CD8-positive, alpha-beta T cell (primary cell): ENCODE measurements at regions of chr11 and their contacts with region 1.

Region 1: DNA sequence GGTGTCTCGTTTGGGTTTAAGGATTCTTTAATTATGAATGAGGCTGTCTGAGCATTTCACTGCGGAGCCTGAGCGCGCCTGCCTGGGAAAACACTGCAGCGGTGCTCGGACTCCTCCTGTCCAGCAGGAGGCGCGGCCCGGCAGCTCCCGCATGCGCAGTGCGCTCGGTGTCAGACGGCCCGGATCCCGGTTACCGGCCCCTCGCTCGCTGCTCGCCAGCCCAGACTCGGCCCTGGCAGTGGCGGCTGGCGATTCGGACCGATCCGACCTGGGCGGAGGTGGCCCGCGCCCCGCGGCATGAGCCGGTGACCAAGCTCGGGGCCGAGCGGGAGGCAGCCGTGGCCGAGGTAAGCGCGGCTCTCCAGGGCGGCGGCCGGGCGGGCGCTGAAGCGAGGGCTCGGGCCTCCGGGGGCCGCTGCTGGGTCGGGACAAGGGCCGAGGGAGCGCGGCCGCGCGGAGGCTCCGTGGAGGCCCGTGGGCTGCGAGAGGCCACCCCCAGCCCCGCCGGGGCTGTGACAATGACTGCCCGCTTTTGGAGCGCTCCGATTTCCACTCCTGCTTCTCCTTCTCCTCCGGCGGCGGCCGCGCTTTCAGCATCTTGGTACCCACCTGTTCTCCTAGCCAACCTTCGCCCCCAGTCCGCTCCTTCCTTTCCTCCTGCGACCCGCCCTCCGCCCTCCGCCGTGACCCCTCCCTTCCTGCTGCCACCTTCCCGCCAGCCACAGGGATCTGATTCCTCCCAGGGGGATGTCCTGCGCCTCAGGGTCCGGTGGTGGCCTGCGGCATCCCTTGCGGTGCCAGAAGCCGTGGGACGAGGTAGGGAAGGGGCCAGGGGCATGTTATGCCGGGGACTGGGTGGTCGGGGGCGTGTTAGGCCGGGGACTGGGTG is at the start of gene EXT2:
- DNase-seq: peak; percentile 67 to 91 (median 87)
- ATAC-seq: peak; percentile 95
- H3K4me3 ChIP-seq: peak within 1 kb of the TSS; percentile 68 to 73
- H3K4me3 Mint-ChIP-seq: peak within 1 kb of the TSS; percentile 88
- H3K27ac ChIP-seq: peak within 1 kb of the TSS in 1 of 2 experiments; percentile 25
- H3K27ac Mint-ChIP-seq: peak within 1 kb of the TSS; percentile 57
- H3K4me1 ChIP-seq: peaks cover 26% of the 10 kb centered on the region
- H3K4me1 Mint-ChIP-seq: peaks cover 40% of the 10 kb centered on the region
- H3K27me3 ChIP-seq: no peaks in the 10 kb centered on the region
- H3K27me3 Mint-ChIP-seq: no peaks in the 10 kb centered on the region
- CTCF ChIP-seq: peak; percentile 91
- total RNA-seq, gene EXT2: 15.8 to 16.1 TPM

Region 2: DNA sequence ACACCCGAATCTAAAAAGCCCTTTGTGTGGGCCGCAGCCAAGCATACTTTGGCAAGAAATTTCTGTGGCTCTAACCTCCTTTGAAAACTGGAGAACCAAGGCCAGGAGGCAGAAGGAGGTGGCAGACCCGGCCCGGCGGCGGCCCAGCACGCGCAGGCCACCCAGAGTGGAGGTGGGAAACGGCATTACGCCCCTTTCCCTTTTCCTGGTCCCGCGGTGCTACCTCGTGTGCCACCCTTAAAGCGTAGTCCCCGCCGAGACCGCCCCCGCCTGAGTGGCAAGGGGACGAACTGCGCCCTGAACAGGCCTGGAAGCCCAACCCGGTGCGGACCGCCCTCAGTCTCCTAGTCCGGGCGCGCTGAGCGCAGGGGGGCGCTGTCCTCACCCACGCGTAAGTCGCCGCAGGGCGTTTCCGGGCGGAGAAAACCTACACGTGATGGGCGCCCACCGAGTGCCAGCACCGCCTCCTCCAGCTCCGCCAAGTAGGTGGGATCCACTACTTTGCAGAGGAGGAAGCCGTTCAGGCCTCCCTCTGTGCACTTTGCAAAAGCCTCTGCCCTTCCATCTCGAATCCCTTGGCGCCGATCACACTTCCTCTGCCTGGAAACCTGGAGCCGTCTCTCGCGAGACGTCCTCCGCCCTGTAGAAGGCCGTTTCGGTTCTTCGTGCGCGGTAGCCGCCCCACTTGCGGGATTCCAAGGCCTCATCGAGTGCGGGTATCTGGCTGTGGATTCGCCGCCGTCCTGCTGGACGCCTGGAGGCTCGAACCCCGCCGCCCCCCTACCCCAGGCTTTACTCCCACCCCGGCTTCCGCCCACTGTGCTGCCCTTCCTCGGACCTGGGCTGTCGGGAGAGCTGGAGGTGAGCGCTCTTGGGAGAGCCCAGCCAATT is 29.7 kb before region 1 on chr11 and contains the start of gene ACCS:
- CTCF ChIA-PET with region 1: interaction called, 35 read pairs
- POLR2A ChIA-PET with region 1: interaction called, 3 read pairs
- intact Hi-C with region 1: loop called (anchors 1 kb)
- DNase-seq: peak; percentile 80 to 96 (median 93)
- ATAC-seq: peak; percentile 96
- H3K4me3 ChIP-seq: peak within 1 kb of the TSS; percentile 80 to 83
- H3K4me3 Mint-ChIP-seq: peak within 1 kb of the TSS; percentile 91
- H3K27ac ChIP-seq: peak within 1 kb of the TSS; percentile 70 to 71
- H3K27ac Mint-ChIP-seq: peak within 1 kb of the TSS; percentile 92
- H3K4me1 ChIP-seq: peaks cover 6% of the 10 kb centered on the region
- H3K4me1 Mint-ChIP-seq: peaks cover 30% of the 10 kb centered on the region
- H3K27me3 ChIP-seq: no peaks in the 10 kb centered on the region
- H3K27me3 Mint-ChIP-seq: no peaks in the 10 kb centered on the region
- CTCF ChIP-seq: peak; percentile 83
- total RNA-seq, gene ACCS: 16.7 to 18.1 TPM

Region 3: DNA sequence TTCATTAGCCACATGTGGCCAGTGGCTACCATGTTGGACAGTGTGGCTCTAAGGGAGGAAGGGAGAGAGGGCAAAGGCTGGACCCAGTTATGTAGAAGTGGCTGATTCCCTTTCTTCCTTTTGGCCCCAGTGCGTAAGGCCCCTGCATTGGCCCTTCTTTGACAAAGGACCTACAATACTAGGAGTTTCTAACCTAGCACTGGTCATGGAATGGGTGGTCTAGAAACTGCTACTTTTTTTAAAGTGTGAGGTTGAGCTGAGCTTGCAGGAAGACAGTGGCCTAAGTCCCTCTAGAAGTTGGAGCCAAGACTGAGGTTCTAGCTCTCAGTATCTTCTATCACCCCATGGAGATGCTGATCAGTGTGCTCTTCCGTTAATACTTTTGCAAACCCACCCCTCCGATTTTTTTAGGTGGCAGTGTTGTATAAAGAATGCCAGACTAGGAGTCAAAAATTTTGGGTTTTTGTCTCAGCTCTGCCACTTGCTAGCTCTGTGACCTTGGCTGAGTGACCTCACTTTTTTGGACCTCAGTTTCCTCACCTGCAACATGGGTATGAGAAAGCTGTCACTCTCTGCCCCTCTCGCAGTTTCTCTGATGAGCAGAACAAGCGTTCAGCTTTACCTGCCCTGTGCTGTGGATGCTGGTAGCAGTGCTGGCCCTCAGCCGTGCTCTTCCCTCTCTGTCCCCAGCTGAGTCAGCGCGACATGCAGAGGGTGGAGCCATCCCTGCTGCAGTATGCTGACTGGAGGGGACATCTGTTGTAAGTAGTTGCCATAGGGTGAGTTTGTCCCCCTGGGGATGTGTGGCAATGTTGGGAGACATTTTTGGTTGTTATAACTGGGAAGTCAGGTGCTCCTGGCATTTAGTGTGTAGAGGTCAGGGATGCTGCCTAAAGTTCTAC is 22.7 kb before region 1 on chr11:
- CTCF ChIA-PET with region 1: interaction called, 35 read pairs
- POLR2A ChIA-PET with region 1: no interaction called
- intact Hi-C with region 1: no loop called
- DNase-seq: no peak
- ATAC-seq: no peak
- H3K4me3 ChIP-seq: no peak overlapping the region
- H3K4me3 Mint-ChIP-seq: no peak overlapping the region
- H3K27ac ChIP-seq: no peak overlapping the region
- H3K27ac Mint-ChIP-seq: no peak overlapping the region
- H3K4me1 ChIP-seq: no peaks in the 10 kb centered on the region
- H3K4me1 Mint-ChIP-seq: peaks cover 7% of the 10 kb centered on the region
- H3K27me3 ChIP-seq: no peaks in the 10 kb centered on the region
- H3K27me3 Mint-ChIP-seq: no peaks in the 10 kb centered on the region
- CTCF ChIP-seq: no peak

Region 4: DNA sequence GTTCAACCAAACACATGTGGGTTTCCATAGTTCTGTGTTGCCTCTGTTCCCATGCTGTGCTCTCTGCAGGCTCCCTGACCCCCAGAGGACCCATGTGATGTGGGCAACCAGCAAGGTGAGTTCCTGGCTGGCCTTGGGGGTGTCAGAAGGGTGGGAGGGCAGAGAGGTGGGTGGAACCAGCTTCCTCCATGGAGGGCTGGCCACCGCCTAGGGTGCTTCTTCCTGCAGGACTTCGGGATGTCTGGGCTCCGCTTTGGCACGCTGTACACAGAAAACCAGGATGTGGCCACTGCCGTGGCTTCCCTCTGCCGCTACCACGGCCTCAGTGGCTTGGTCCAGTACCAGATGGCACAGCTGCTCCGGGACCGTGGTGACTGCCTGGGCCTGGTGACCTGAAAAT is 14.8 kb before region 1 on chr11:
- CTCF ChIA-PET with region 1: interaction called, 12 read pairs
- POLR2A ChIA-PET with region 1: no interaction called
- intact Hi-C with region 1: no loop called
- DNase-seq: no peak
- ATAC-seq: no peak
- H3K4me3 ChIP-seq: no peak overlapping the region
- H3K4me3 Mint-ChIP-seq: no peak overlapping the region
- H3K27ac ChIP-seq: no peak overlapping the region
- H3K27ac Mint-ChIP-seq: no peak overlapping the region
- H3K4me1 ChIP-seq: no peaks in the 10 kb centered on the region
- H3K4me1 Mint-ChIP-seq: no peaks in the 10 kb centered on the region
- H3K27me3 ChIP-seq: no peaks in the 10 kb centered on the region
- H3K27me3 Mint-ChIP-seq: no peaks in the 10 kb centered on the region
- CTCF ChIP-seq: no peak

Region 5: DNA sequence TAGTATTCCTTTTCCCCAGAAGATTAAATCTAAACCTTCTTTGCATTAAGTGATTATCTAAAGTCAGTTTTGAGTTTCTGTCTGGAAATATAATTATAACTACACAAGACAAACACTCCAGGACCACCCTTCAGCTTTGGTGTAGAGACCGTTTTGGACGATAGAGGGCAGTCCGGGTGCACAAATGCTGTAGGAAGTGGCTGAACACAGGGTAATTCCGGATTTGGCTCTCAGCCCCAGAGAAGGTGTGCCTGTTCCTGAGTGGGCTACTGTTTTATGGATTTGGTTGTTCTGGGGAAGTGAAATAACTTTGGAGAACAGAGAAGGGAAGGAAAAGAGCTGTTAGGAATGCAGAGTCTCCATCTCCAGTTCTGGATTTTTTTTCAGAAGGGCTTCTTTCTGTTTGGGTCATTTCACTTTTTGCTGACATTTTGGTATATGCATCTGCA is 14.5 kb after region 1 on chr11:
- CTCF ChIA-PET with region 1: interaction called, 59 read pairs
- POLR2A ChIA-PET with region 1: no interaction called
- intact Hi-C with region 1: loop called in 1 of 2 experiments (anchors 1 kb)
- DNase-seq: peak; percentile 25 to 73 (median 54)
- ATAC-seq: peak; percentile 94
- H3K4me3 ChIP-seq: no peak overlapping the region
- H3K4me3 Mint-ChIP-seq: no peak overlapping the region
- H3K27ac ChIP-seq: no peak overlapping the region
- H3K27ac Mint-ChIP-seq: no peak overlapping the region
- H3K4me1 ChIP-seq: peaks cover 5% of the 10 kb centered on the region
- H3K4me1 Mint-ChIP-seq: peaks cover 8% of the 10 kb centered on the region
- H3K27me3 ChIP-seq: no peaks in the 10 kb centered on the region
- H3K27me3 Mint-ChIP-seq: no peaks in the 10 kb centered on the region
- CTCF ChIP-seq: peak; percentile 81

Region 6: DNA sequence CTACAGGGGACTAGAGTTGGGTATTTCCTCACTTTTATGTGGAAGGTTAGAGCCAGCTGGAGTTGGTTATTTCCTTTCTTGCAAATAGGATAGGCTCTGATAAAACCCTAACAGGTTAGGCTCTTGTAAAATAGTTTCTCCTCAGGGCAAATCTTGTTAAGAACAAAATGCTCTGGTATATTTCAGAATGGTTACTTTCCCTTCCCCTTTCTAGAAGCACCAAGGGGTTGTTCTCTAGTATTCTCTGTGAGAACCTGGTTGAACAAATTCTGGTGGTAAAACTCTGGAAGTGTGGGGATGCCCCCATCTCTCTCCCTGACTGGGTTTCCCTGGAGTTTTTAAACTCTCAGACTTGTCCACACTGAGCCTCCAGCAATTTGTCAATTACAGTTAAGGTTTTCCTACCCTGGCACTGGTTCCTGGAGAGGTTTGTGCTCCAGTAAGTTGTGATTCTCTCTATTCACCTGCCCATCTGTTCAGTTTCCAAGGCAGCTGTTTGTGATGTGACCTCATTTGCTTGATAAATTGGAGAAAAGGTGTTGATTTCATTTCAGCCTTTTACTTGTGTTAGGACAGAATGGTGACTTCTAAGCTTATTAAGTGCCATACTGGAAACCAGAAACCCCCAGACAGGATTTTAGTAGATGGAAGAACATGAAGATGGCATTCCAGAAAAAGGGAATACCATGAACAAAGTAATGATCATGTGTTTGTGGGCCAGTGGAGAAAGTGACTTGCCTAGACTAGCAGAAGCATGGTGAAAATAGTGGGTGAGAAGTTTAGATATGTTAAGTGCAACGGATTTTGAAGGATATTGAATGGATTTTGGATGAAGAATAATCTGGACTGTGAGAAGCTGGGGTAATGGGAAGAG is 64.3 kb after region 1 on chr11:
- CTCF ChIA-PET with region 1: no interaction called
- POLR2A ChIA-PET with region 1: no interaction called
- intact Hi-C with region 1: loop called in 1 of 2 experiments (anchors 10 kb)
- DNase-seq: no peak
- ATAC-seq: no peak
- H3K4me3 ChIP-seq: no peak overlapping the region
- H3K4me3 Mint-ChIP-seq: no peak overlapping the region
- H3K27ac ChIP-seq: no peak overlapping the region
- H3K27ac Mint-ChIP-seq: no peak overlapping the region
- H3K4me1 ChIP-seq: peaks cover 3% of the 10 kb centered on the region
- H3K4me1 Mint-ChIP-seq: peaks cover 14% of the 10 kb centered on the region
- H3K27me3 ChIP-seq: no peaks in the 10 kb centered on the region
- H3K27me3 Mint-ChIP-seq: no peaks in the 10 kb centered on the region
- CTCF ChIP-seq: no peak

Region 7: DNA sequence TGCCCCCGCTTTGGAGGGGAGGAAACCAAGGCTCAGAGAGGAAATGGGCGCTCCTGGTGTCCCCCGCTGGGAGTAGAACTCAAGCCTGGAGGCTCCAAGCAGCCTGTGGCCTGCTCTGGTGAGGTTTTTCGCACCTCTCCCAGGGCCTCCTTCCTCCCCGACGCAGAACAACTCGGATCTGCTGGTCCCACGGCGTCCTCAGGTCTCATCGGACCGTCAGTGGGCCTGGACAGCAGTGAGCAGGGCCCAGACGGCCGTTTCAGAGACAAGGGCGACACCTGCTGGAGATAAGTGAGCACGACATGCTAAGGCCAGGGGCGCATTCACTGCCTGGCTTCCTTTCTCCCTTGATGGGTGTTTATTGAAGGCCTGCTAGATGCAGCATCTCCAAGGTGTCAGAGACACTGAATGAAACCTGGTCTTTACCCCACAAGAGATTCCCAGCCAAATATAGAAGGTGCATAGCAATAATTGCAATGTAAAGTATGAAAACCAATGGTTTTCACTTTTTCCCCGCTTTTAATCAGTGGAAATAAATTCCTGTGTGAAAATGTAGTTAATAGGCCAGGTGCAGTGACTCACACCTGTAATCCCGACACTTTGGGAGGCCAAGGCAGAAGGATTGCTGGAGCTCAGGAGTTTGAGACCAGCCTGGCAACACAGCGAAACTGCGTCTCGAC is 442.8 kb after region 1 on chr11:
- CTCF ChIA-PET with region 1: interaction called, 8 read pairs
- POLR2A ChIA-PET with region 1: no interaction called
- intact Hi-C with region 1: loop called in 1 of 2 experiments (anchors 1 kb)
- DNase-seq: peak; percentile 49 to 81 (median 70)
- ATAC-seq: peak; percentile 80
- H3K4me3 ChIP-seq: no peak overlapping the region
- H3K4me3 Mint-ChIP-seq: no peak overlapping the region
- H3K27ac ChIP-seq: no peak overlapping the region
- H3K27ac Mint-ChIP-seq: no peak overlapping the region
- H3K4me1 ChIP-seq: no peaks in the 10 kb centered on the region
- H3K4me1 Mint-ChIP-seq: no peaks in the 10 kb centered on the region
- H3K27me3 ChIP-seq: no peaks in the 10 kb centered on the region
- H3K27me3 Mint-ChIP-seq: peaks cover 2% of the 10 kb centered on the region
- CTCF ChIP-seq: peak; percentile 99